T-cell (primary cell): ENCODE measurements at regions of chr1 and their contacts with region 1.

Region 1: GRCh38 chr1:214328770-214329469 is 48.0 kb downstream of the SMYD2 start:
- DNase-seq: peak; percentile 52 to 86 (median 70)
- ATAC-seq: peak; percentile 86 to 96 (median 95)
- H3K4me3 ChIP-seq: no peak overlapping the region
- H3K4me3 Mint-ChIP-seq: no peak overlapping the region
- H3K27ac ChIP-seq: no peak overlapping the region
- H3K27ac Mint-ChIP-seq: peak overlapping the region; percentile 23 to 61
- H3K4me1 ChIP-seq: no peaks in the 10 kb centered on the region
- H3K4me1 Mint-ChIP-seq: peaks cover 0 to 6% (median 4%) of the 10 kb centered on the region in 3 donors
- H3K27me3 ChIP-seq: no peaks in the 10 kb centered on the region
- H3K27me3 Mint-ChIP-seq: no peaks in the 10 kb centered on the region

Region 2: GRCh38 chr1:214213136-214213535 is 115.8 kb before region 1 on chr1:
- CTCF ChIA-PET with region 1: interaction called, 13 to 37 read pairs
- POLR2A ChIA-PET with region 1: no interaction called
- DNase-seq: no peak
- ATAC-seq: no peak
- H3K4me3 ChIP-seq: no peak overlapping the region
- H3K4me3 Mint-ChIP-seq: no peak overlapping the region
- H3K27ac ChIP-seq: no peak overlapping the region
- H3K27ac Mint-ChIP-seq: no peak overlapping the region
- H3K4me1 ChIP-seq: peaks cover 0 to 4% of the 10 kb centered on the region in 2 experiments
- H3K4me1 Mint-ChIP-seq: peaks cover 0 to 4% (median 4%) of the 10 kb centered on the region in 3 donors
- H3K27me3 ChIP-seq: peaks cover 0 to 4% of the 10 kb centered on the region in 2 experiments
- H3K27me3 Mint-ChIP-seq: peaks cover 12 to 19% of the 10 kb centered on the region in 2 donors

Region 3: DNA sequence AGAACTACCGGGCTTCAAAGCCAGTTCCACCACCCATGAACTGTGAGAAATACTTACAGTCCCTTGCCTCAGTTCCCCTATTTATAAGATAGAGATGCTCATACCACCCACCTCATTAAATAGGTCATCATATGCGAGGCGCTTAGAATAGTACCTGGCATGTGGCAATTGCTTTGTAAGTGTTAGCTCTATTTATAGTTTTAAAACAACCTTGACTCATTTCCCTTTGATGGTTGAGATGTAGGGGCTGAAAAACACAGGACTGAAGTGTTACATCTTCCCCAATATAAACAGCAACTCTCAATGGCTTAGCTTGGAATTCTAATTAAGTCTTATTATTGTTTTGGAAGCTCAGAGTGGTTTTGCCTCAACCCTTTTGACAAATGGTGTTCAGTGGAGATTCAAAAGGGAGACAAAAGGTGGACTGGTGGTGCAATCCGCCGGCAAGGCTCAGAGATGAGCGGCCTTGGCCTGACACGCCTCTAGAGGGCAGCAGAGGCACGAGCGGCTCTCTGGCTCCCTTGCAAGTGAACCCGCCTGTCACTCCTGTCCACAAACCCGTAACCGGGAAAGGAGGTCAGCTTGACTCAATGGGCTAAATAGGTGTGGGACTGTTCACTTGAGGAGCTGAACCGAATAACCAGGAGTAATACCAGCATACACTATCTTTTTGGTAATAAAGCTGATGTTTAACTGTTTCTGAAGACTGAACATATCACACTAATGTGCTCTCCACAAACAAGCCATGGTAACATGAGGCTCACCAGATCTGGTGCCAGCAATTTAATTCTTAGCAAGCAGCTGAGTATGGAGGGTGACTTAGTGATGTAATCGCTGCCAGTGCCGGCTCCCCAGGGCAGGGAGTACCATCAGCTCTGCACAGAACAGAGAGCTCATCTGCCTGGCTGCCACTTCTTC is 67.5 kb before region 1 on chr1:
- CTCF ChIA-PET with region 1: interaction called, 246 to 248 read pairs
- POLR2A ChIA-PET with region 1: no interaction called
- DNase-seq: peak; percentile 28 to 85 (median 73)
- ATAC-seq: peak; percentile 92 to 94 (median 92)
- H3K4me3 ChIP-seq: no peak overlapping the region
- H3K4me3 Mint-ChIP-seq: no peak overlapping the region
- H3K27ac ChIP-seq: no peak overlapping the region
- H3K27ac Mint-ChIP-seq: no peak overlapping the region
- H3K4me1 ChIP-seq: no peaks in the 10 kb centered on the region
- H3K4me1 Mint-ChIP-seq: peaks cover 0 to 3% (median 3%) of the 10 kb centered on the region in 3 donors
- H3K27me3 ChIP-seq: peaks cover 0 to 19% of the 10 kb centered on the region in 2 experiments
- H3K27me3 Mint-ChIP-seq: peaks cover 41 to 67% of the 10 kb centered on the region in 2 donors

Region 4: GRCh38 chr1:214316593-214316992 is 12.3 kb before region 1 on chr1:
- CTCF ChIA-PET with region 1: interaction called, 20 to 25 read pairs
- POLR2A ChIA-PET with region 1: no interaction called
- DNase-seq: no peak
- ATAC-seq: no peak
- H3K4me3 ChIP-seq: no peak overlapping the region
- H3K4me3 Mint-ChIP-seq: no peak overlapping the region
- H3K27ac ChIP-seq: no peak overlapping the region
- H3K27ac Mint-ChIP-seq: no peak overlapping the region
- H3K4me1 ChIP-seq: no peaks in the 10 kb centered on the region
- H3K4me1 Mint-ChIP-seq: peaks cover 3 to 16% (median 7%) of the 10 kb centered on the region in 3 donors
- H3K27me3 ChIP-seq: no peaks in the 10 kb centered on the region
- H3K27me3 Mint-ChIP-seq: no peaks in the 10 kb centered on the region

Region 5: GRCh38 chr1:214362188-214362882 is 33.4 kb after region 1 on chr1:
- CTCF ChIA-PET with region 1: no interaction called
- POLR2A ChIA-PET with region 1: no interaction called
- DNase-seq: no peak
- ATAC-seq: no peak
- H3K4me3 ChIP-seq: no peak overlapping the region
- H3K4me3 Mint-ChIP-seq: no peak overlapping the region
- H3K27ac ChIP-seq: no peak overlapping the region
- H3K27ac Mint-ChIP-seq: no peak overlapping the region
- H3K4me1 ChIP-seq: no peaks in the 10 kb centered on the region
- H3K4me1 Mint-ChIP-seq: no peaks in the 10 kb centered on the region
- H3K27me3 ChIP-seq: peaks cover 0 to 15% of the 10 kb centered on the region in 2 experiments
- H3K27me3 Mint-ChIP-seq: peaks cover 44 to 48% of the 10 kb centered on the region in 2 donors

Region 6: GRCh38 chr1:214584805-214585766 is 256.2 kb after region 1 on chr1:
- CTCF ChIA-PET with region 1: interaction called, 3 to 14 read pairs
- POLR2A ChIA-PET with region 1: no interaction called
- DNase-seq: no peak
- ATAC-seq: peak in 2 of 4 experiments; percentile 19 to 52
- H3K4me3 ChIP-seq: no peak overlapping the region
- H3K4me3 Mint-ChIP-seq: no peak overlapping the region
- H3K27ac ChIP-seq: no peak overlapping the region
- H3K27ac Mint-ChIP-seq: no peak overlapping the region
- H3K4me1 ChIP-seq: no peaks in the 10 kb centered on the region
- H3K4me1 Mint-ChIP-seq: no peaks in the 10 kb centered on the region
- H3K27me3 ChIP-seq: no peaks in the 10 kb centered on the region
- H3K27me3 Mint-ChIP-seq: peaks cover 4 to 8% of the 10 kb centered on the region in 2 donors